Adrenal gland (tissue), 19 donors: ENCODE measurements at regions of chr19 and their contacts with region 1.

Region 1: GRCh38 chr19:39792999-39793546 is 14.4 kb downstream of the LEUTX start:
- DNase-seq: peak; percentile 62 to 88 (median 75)
- H3K4me3 ChIP-seq: peak overlapping the region in 2 of 4 donors; percentile 41 to 48
- H3K27ac ChIP-seq: no peak overlapping the region
- H3K4me1 ChIP-seq: no peaks in the 10 kb centered on the region
- H3K27me3 ChIP-seq: no peaks in the 10 kb centered on the region
- CTCF ChIP-seq: peak; percentile 83 to 89 (median 88)
- POLR2A ChIP-seq: no peak

Region 2: DNA sequence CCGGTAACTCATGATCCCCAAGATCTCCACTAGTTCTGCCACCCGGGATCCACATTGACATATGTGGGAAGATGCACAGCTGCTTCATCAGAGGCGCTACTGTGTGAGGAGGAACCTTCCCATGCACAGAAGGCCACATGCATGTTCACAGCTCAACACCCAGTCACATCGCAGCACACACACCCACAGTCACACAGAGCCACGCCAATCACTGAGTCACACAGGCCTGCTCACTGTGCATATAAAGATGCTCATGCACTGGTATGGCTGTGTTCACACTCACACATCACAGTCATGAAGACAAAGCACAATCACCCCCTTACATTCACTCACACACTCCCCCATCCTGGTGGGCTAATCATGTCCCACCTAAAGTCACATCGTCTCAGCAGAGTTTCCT is 65.0 kb before region 1 on chr19:
- intact Hi-C with region 1: no loop called
- DNase-seq: no peak
- H3K4me3 ChIP-seq: no peak overlapping the region
- H3K27ac ChIP-seq: no peak overlapping the region
- H3K4me1 ChIP-seq: no peaks in the 10 kb centered on the region
- H3K27me3 ChIP-seq: no peaks in the 10 kb centered on the region
- CTCF ChIP-seq: no peak
- POLR2A ChIP-seq: no peak

Region 3: DNA sequence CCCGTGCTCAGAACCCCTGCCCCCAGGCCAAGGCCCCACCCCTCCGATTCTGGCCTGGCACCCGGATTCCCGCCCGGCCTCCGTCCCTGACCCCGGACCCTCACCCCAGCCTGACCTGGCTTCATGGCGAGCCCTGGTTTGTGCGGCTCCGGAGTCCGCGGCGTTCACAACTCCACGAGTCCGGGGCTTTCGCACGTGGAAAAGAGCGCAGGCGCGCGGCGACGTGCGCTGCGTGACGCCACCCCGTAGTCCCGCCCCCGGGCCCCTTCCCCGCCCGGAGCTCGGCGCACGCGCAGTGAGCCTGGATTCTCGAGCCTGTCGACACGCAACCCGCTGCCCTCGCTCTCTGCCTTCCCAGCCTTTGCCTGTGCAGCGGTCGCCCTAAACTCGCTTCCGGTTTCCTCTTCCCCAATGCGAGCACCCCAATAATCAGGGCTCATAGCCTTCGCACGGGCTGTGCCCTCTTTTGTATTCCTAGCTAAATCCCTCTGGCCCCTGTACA is 53.2 kb after region 1 on chr19 and contains the start of gene FBL:
- intact Hi-C with region 1: loop called (anchors 2 to 10 kb)
- DNase-seq: peak; percentile 94 to 98 (median 97)
- H3K4me3 ChIP-seq: peak within 1 kb of the TSS; percentile 54 to 72 (median 72)
- H3K27ac ChIP-seq: peak within 1 kb of the TSS; percentile 33 to 89 (median 76)
- H3K4me1 ChIP-seq: peaks cover 13 to 31% of the 10 kb centered on the region in 2 donors
- H3K27me3 ChIP-seq: no peaks in the 10 kb centered on the region
- CTCF ChIP-seq: no peak
- POLR2A ChIP-seq: peak in 1 of 2 donors; percentile 74
- total RNA-seq, gene FBL: 52.4 to 196 (median 101) TPM